Natural killer cell (primary cell): ENCODE measurements at regions of chr6 and their contacts with region 1.

Region 1: GRCh38 chr6:16128759-16129622 is at the start of gene MYLIP:
- DNase-seq: peak; percentile 97 to 98
- ATAC-seq: peak; percentile 74 to 93 (median 83)
- H3K4me3 ChIP-seq: peak within 1 kb of the TSS; percentile 99
- H3K4me3 Mint-ChIP-seq: peak within 1 kb of the TSS; percentile 97
- H3K27ac ChIP-seq: peak within 1 kb of the TSS; percentile 96
- H3K27ac Mint-ChIP-seq: peak within 1 kb of the TSS; percentile 92
- H3K4me1 ChIP-seq: peaks cover 17% of the 10 kb centered on the region
- H3K4me1 Mint-ChIP-seq: peaks cover 43 to 60% of the 10 kb centered on the region in 2 donors
- H3K27me3 ChIP-seq: no peaks in the 10 kb centered on the region
- H3K27me3 Mint-ChIP-seq: no peaks in the 10 kb centered on the region
- CTCF ChIP-seq: peak; percentile 60
- total RNA-seq, gene MYLIP: 127 to 207 (median 150) TPM

Region 2: DNA sequence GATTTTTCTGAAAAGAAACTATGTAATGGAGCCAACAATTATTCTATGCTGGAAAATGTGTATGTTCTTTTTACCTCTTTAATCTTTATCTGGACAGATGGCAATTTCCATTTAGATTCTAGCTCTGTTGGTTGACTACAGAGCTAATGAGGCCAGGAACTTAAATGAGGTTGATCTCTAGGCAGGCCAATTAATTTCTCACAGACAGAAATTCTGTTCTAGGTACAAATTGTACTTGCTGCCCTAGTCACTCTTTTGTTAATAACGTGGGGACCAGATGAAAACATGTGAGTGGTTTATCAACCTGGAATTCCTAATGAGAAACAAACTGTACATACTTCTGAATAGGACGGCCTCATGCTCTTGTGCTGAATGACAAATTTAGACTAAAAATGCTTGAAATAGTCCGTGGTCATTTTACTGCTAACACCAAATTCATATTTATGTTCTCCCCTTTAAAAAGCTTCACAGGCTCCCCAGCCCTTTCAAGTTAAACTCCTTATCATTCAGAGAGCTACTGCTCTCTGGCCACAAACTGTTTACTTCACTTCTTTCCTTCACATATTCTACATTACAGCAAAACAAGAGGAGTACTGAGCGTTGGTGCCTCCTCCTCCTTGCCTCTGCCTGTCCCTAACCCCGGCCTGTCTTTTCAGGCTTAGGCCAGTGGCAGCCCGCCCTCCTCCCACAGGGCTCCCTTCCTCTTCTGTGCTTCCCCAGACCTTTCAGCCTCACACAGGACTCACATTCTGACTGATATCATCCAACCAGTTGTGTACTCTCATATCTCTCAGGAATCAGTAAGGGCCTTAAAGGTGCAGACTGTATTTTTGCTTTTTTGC is 507.6 kb before region 1 on chr6:
- intact Hi-C with region 1: loop called (anchors 10 kb)
- DNase-seq: no peak
- ATAC-seq: peak in 2 of 3 donors; percentile 53 to 67
- H3K4me3 ChIP-seq: no peak overlapping the region
- H3K4me3 Mint-ChIP-seq: no peak overlapping the region
- H3K27ac ChIP-seq: peak overlapping the region; percentile 34
- H3K27ac Mint-ChIP-seq: peak overlapping the region in 1 of 2 donors; percentile 84
- H3K4me1 ChIP-seq: peaks cover 6% of the 10 kb centered on the region
- H3K4me1 Mint-ChIP-seq: peaks cover 37 to 51% of the 10 kb centered on the region in 2 donors
- H3K27me3 ChIP-seq: no peaks in the 10 kb centered on the region
- H3K27me3 Mint-ChIP-seq: no peaks in the 10 kb centered on the region
- CTCF ChIP-seq: no peak

Region 3: DNA sequence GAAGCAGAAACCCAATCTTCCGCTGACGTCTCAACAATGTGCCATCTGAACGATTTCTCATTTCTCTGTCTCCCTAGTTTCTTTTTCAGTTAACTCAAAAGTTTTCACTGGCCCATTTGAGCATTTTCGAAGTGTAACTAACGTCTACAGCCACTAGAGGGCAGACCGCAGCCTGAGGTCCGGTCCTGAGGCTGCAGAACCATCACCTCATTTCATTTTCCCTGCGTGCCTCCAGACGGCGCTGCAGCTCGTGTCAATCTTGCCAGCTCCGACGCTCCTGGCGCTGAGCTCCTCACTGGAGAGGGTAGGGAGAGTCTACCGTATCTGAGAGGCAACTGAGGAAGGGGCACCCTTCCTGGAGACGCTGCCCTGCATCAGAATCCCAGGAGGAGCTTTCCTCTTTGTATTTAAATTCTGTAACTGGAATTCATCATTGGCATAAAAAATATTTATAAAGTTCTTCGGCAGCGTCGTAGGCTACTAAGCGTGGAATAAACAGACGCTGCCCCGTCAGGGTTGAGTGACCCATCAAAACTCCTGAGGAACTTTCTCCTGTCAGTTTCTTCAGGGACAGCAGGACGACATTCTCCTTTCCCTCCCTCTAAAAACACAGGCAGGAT is 437.6 kb before region 1 on chr6:
- intact Hi-C with region 1: loop called (anchors 2 kb)
- DNase-seq: peak; percentile 73 to 94
- ATAC-seq: peak; percentile 99 to 100 (median 100)
- H3K4me3 ChIP-seq: no peak overlapping the region
- H3K4me3 Mint-ChIP-seq: peak overlapping the region; percentile 17
- H3K27ac ChIP-seq: no peak overlapping the region
- H3K27ac Mint-ChIP-seq: peak overlapping the region in 1 of 2 donors; percentile 57
- H3K4me1 ChIP-seq: peaks cover 3% of the 10 kb centered on the region
- H3K4me1 Mint-ChIP-seq: peaks cover 8 to 9% of the 10 kb centered on the region in 2 donors
- H3K27me3 ChIP-seq: no peaks in the 10 kb centered on the region
- H3K27me3 Mint-ChIP-seq: peaks cover 10 to 22% of the 10 kb centered on the region in 2 donors
- CTCF ChIP-seq: peak; percentile 100

Region 4: GRCh38 chr6:15994814-15995459 is 134.1 kb before region 1 on chr6:
- intact Hi-C with region 1: loop called (anchors 2 kb)
- DNase-seq: peak in 1 of 2 donors; percentile 4
- ATAC-seq: peak in 1 of 3 donors; percentile 49
- H3K4me3 ChIP-seq: no peak overlapping the region
- H3K4me3 Mint-ChIP-seq: peak overlapping the region; percentile 58
- H3K27ac ChIP-seq: peak overlapping the region; percentile 9
- H3K27ac Mint-ChIP-seq: peak overlapping the region; percentile 56 to 86
- H3K4me1 ChIP-seq: peaks cover 20% of the 10 kb centered on the region
- H3K4me1 Mint-ChIP-seq: peaks cover 35 to 47% of the 10 kb centered on the region in 2 donors
- H3K27me3 ChIP-seq: no peaks in the 10 kb centered on the region
- H3K27me3 Mint-ChIP-seq: no peaks in the 10 kb centered on the region
- CTCF ChIP-seq: no peak

Region 5: DNA sequence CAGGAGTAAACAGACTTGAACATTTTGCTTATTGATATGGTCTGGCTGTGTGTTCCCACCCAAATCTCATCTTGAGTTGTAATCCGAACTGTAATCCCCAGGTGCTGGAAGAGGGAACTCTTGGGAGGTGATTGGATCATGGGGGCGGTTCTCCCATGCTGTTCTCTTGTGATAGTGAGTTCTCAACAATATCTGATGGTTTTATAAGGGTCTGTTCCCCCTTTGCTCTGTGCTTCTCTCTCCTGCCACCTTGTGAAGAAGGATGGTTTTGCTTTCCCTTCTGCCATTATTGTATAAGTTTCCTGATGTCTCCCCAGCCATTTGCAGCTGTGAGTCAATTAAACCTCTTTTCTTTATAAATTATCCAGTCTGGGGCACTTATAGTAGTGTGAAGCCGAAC is 39.9 kb after region 1 on chr6:
- intact Hi-C with region 1: loop called (anchors 1 kb)
- DNase-seq: peak in 1 of 2 donors; percentile 56
- ATAC-seq: peak; percentile 46 to 66 (median 62)
- H3K4me3 ChIP-seq: no peak overlapping the region
- H3K4me3 Mint-ChIP-seq: peak overlapping the region; percentile 76
- H3K27ac ChIP-seq: peak overlapping the region; percentile 1
- H3K27ac Mint-ChIP-seq: peak overlapping the region; percentile 79 to 86
- H3K4me1 ChIP-seq: peaks cover 14% of the 10 kb centered on the region
- H3K4me1 Mint-ChIP-seq: peaks cover 58 to 62% of the 10 kb centered on the region in 2 donors
- H3K27me3 ChIP-seq: no peaks in the 10 kb centered on the region
- H3K27me3 Mint-ChIP-seq: no peaks in the 10 kb centered on the region
- CTCF ChIP-seq: peak; percentile 41

Region 6: DNA sequence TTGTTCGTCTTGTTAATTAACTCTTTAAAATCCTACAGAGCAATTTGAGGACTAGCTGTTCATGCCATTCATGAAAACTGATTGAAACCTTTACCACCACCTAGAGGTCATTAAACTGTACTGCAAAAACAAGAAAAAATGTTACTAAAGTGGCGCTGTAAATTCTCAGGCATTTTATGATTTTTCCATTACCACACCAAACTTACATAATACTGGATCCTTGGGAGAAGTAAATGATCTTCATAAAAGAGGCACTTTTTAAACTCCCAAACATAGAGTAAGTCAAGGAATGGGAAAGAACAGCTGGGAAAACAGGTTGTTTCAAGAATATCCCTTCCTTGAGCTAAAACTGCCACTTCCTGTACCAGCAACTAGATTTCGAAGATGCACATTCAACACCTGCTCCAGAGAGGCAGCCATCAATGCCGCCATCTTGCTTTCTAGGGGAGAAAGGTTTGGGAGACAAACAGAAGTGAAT is 54.2 kb after region 1 on chr6:
- intact Hi-C with region 1: loop called (anchors 1 kb)
- DNase-seq: peak in 1 of 2 donors; percentile 63
- ATAC-seq: peak in 1 of 3 donors; percentile 20
- H3K4me3 ChIP-seq: no peak overlapping the region
- H3K4me3 Mint-ChIP-seq: peak overlapping the region; percentile 35
- H3K27ac ChIP-seq: no peak overlapping the region
- H3K27ac Mint-ChIP-seq: peak overlapping the region in 1 of 2 donors; percentile 42
- H3K4me1 ChIP-seq: peaks cover 28% of the 10 kb centered on the region
- H3K4me1 Mint-ChIP-seq: peaks cover 39 to 41% of the 10 kb centered on the region in 2 donors
- H3K27me3 ChIP-seq: no peaks in the 10 kb centered on the region
- H3K27me3 Mint-ChIP-seq: no peaks in the 10 kb centered on the region
- CTCF ChIP-seq: peak; percentile 91

Region 7: GRCh38 chr6:16206595-16207037 is 77.6 kb after region 1 on chr6:
- intact Hi-C with region 1: no loop called
- DNase-seq: peak; percentile 25 to 72
- ATAC-seq: peak; percentile 84 to 97 (median 89)
- H3K4me3 ChIP-seq: no peak overlapping the region
- H3K4me3 Mint-ChIP-seq: no peak overlapping the region
- H3K27ac ChIP-seq: no peak overlapping the region
- H3K27ac Mint-ChIP-seq: no peak overlapping the region
- H3K4me1 ChIP-seq: no peaks in the 10 kb centered on the region
- H3K4me1 Mint-ChIP-seq: peaks cover 5% of the 10 kb centered on the region in 2 donors
- H3K27me3 ChIP-seq: no peaks in the 10 kb centered on the region
- H3K27me3 Mint-ChIP-seq: peaks cover 19 to 22% of the 10 kb centered on the region in 2 donors
- CTCF ChIP-seq: peak; percentile 99

Region 8: GRCh38 chr6:16319813-16320532 is 191.0 kb after region 1 on chr6:
- intact Hi-C with region 1: loop called (anchors 2 kb)
- DNase-seq: peak; percentile 63 to 86
- ATAC-seq: peak; percentile 59 to 73 (median 64)
- H3K4me3 ChIP-seq: peak overlapping the region; percentile 19
- H3K4me3 Mint-ChIP-seq: peak overlapping the region; percentile 69
- H3K27ac ChIP-seq: peak overlapping the region; percentile 77
- H3K27ac Mint-ChIP-seq: peak overlapping the region; percentile 77 to 95
- H3K4me1 ChIP-seq: peaks cover 73% of the 10 kb centered on the region
- H3K4me1 Mint-ChIP-seq: peaks cover 67 to 70% of the 10 kb centered on the region in 2 donors
- H3K27me3 ChIP-seq: no peaks in the 10 kb centered on the region
- H3K27me3 Mint-ChIP-seq: no peaks in the 10 kb centered on the region
- CTCF ChIP-seq: no peak